Left cardiac atrium (tissue), 4 donors: ENCODE measurements at regions of chr20 and their contacts with region 1.

Region 1: DNA sequence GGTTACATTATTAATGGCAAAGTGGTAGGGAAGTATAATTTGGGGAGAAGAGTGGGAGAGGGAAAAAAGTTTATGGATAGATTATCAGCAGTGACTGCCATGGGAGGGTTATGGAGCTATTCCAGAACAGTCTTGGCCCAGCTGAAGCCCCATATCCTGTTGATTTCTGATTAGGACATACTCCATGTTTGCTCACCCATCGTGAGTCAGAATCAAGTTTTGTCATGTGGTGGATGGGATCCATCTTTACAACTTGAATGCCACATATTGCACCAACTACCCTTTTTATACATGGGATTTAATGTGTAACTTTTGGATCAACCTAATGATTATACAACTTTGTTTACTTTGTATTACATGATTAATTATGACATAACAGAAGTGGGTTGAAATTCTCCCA is 217.0 kb downstream of the HAO1 start:
- DNase-seq: peak; percentile 24
- ATAC-seq: peak in 1 of 2 donors; percentile 65

Region 2: GRCh38 chr20:7637184-7637583 is 86.1 kb before region 1 on chr20:
- intact Hi-C with region 1: loop called in 1 of 2 experiments (anchors 5 kb)
- DNase-seq: no peak
- ATAC-seq: no peak

Region 3: DNA sequence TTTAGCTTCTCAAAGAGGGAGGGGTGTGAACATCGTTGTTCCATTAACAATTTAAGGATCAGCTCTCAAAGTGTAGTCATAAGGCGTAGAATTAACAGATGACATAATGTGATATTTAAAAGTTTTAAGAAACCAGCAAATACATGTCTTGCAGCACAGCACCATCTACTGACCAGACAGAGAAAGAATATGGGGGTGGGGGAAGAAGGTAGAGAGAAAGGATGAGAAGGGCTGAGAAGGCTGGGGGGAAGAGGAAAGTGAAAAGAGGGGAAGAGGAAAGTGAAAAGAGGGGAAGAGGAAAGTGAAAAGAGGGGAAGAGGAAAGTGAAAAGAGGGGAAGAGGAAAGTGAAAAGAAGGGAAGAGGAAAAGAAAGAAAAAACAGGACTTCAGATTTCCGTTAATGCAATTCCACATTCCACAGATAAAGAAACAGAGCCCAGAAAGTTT is 136.1 kb after region 1 on chr20:
- intact Hi-C with region 1: no loop called
- DNase-seq: no peak
- ATAC-seq: peak; percentile 82